OCI-LY7 (cell line): ENCODE measurements at regions of chr21 and their contacts with region 1.

Region 1: GRCh38 chr21:43718872-43719747 is at the start of gene PDXK:
- DNase-seq: peak; percentile 93
- H3K4me3 ChIP-seq: peak within 1 kb of the TSS; percentile 96
- H3K27ac ChIP-seq: peak within 1 kb of the TSS; percentile 55
- H3K4me1 ChIP-seq: peaks cover 60% of the 10 kb centered on the region
- CTCF ChIP-seq: peak; percentile 59
- total RNA-seq, gene PDXK: 32.8 and 37.5 TPM in 2 replicates

Region 2: GRCh38 chr21:43323244-43324005 is 395.7 kb before region 1 on chr21:
- CTCF ChIA-PET with region 1: no interaction called
- POLR2A ChIA-PET with region 1: no interaction called
- intact Hi-C with region 1: loop called (anchors 10 kb)
- DNase-seq: no peak
- H3K4me3 ChIP-seq: no peak overlapping the region
- H3K27ac ChIP-seq: no peak overlapping the region
- H3K4me1 ChIP-seq: peaks cover 21% of the 10 kb centered on the region
- CTCF ChIP-seq: no peak

Region 3: GRCh38 chr21:43667191-43667904 is 51.8 kb before region 1 on chr21:
- CTCF ChIA-PET with region 1: no interaction called
- POLR2A ChIA-PET with region 1: no interaction called
- intact Hi-C with region 1: loop called (anchors 5 kb)
- DNase-seq: no peak
- H3K4me3 ChIP-seq: no peak overlapping the region
- H3K27ac ChIP-seq: no peak overlapping the region
- H3K4me1 ChIP-seq: peaks cover under 1% of the 10 kb centered on the region
- CTCF ChIP-seq: no peak

Region 4: GRCh38 chr21:43775795-43776430 is 56.8 kb after region 1 on chr21 and contains the start of gene CSTB:
- CTCF ChIA-PET with region 1: no interaction called
- POLR2A ChIA-PET with region 1: no interaction called
- intact Hi-C with region 1: loop called (anchors 5 kb)
- DNase-seq: peak; percentile 80
- H3K4me3 ChIP-seq: peak within 1 kb of the TSS; percentile 90
- H3K27ac ChIP-seq: peak within 1 kb of the TSS; percentile 48
- H3K4me1 ChIP-seq: peaks cover 27% of the 10 kb centered on the region
- CTCF ChIP-seq: peak; percentile 35; the same call in 1 of the 2 replicates
- total RNA-seq, gene CSTB: 12.5 and 15.6 TPM in 2 replicates